ENCODE measurements at regions of chr3 and their contacts with region 1.

Region 1: GRCh38 chr3:119891944-119892721 is 110.2 kb downstream of the NR1I2 start:
- DNase-seq: no peak
- H3K4me3 ChIP-seq: no peak overlapping the region
- H3K27ac ChIP-seq: no peak overlapping the region
- H3K4me1 ChIP-seq: peaks cover 0 to 6% (median 4%) of the 10 kb centered on the region in 4 donors
- H3K27me3 ChIP-seq: no peaks in the 10 kb centered on the region
- CTCF ChIP-seq: peak; percentile 61 to 73

Region 2: DNA sequence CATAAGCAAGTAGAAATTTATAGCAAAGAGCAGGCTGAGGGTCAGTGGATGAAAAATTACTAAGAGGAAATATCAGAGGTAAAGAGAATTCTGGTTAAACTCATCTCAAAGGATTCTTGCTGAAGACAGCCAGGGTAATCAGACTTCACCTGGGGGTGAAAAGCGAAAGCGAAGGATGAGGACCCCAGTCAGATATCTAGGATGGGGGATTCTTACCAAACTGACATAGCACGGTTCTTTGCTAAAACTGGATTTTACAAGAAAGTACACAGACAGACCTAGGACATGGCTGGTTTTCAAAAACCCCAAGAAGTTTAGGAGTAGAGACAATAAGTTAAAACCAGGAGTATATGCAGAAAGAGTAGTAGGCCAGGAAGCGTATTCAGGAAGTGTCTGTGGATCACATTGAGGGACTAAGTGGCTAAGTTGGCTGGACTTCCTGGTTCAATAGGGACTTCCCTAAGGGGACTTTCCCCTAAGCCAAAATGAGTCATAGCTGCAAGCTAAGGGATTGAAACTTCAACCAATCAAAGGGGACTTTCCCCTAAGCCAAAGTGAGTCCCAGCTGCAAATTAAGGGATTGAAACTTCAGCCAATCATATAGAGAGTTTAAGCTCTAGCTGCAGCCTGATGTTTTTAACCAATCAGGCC is 191.7 kb before region 1 on chr3:
- intact Hi-C with region 1: no loop called
- DNase-seq: no peak
- H3K4me3 ChIP-seq: no peak overlapping the region
- H3K27ac ChIP-seq: no peak overlapping the region
- H3K4me1 ChIP-seq: peaks cover 0 to 18% (median 7%) of the 10 kb centered on the region in 4 donors
- H3K27me3 ChIP-seq: no peaks in the 10 kb centered on the region
- CTCF ChIP-seq: no peak

Region 3: DNA sequence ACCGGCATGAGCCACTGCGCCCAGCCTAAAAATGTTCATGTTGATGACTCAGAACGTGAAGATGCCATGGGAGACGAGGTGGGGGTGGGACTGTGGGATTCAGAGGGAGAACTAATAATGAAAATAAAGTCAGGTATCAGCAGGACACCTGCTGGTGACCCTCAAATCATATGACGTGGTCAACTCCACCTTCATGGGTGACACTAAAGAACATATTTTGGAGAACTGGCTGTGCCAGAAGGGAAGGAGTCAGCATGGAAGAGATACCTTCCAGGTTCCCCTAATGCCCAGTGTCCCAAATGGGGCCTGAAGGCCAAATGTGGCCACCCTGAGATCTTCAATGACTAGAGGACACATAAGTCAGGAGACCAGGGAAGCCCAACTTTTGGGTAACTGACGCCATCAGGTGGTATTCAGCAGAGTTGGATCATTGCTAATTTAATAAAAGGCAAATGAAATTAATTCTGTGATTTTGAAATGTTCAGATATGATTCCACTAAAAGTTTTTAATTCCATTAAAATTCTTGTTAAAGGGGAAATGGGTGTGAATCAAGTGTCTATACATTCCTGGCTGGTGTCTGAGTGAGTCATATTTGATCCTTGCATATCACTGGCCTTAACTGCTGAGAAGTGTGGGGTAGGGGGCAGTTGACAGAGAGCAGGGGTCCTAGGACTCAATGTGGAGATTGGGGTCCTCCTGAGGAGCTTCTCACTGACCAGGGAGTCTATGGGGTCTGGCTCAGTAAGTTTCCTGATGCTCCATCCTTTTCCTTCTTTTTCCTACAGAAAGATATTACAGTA is 290.8 kb after region 1 on chr3:
- intact Hi-C with region 1: loop called (anchors 5 kb)
- DNase-seq: no peak
- H3K4me3 ChIP-seq: no peak overlapping the region
- H3K27ac ChIP-seq: no peak overlapping the region
- H3K4me1 ChIP-seq: peaks cover 0 to 9% (median under 1%) of the 10 kb centered on the region in 4 donors
- H3K27me3 ChIP-seq: no peaks in the 10 kb centered on the region
- CTCF ChIP-seq: peak in 1 of 2 experiments; percentile 16

Region 4: GRCh38 chr3:120239644-120240043 is 347.5 kb after region 1 on chr3:
- intact Hi-C with region 1: loop called (anchors 5 kb)
- DNase-seq: no peak
- H3K4me3 ChIP-seq: no peak overlapping the region
- H3K27ac ChIP-seq: no peak overlapping the region
- H3K4me1 ChIP-seq: no peaks in the 10 kb centered on the region
- H3K27me3 ChIP-seq: no peaks in the 10 kb centered on the region
- CTCF ChIP-seq: no peak